HCT116 (cell line): ENCODE measurements at regions of chr13 and their contacts with region 1.

Region 1: GRCh38 chr13:61685682-61686012 is 270.0 kb upstream of the PCDH20 start:
- DNase-seq: peak; percentile 3
- ATAC-seq: peak; percentile 59
- H3K4me3 ChIP-seq: no peak overlapping the region
- H3K27ac ChIP-seq: no peak overlapping the region
- H3K4me1 ChIP-seq: no peaks in the 10 kb centered on the region
- H3K27me3 ChIP-seq: no peaks in the 10 kb centered on the region
- CTCF ChIP-seq: peak; percentile 4 to 21 (median 6); a peak in 2 of 6 replicates
- POLR2A ChIP-seq: no peak
- RAD21 ChIP-seq: peak; percentile 44; the same call in 1 of the 2 replicates

Region 2: DNA sequence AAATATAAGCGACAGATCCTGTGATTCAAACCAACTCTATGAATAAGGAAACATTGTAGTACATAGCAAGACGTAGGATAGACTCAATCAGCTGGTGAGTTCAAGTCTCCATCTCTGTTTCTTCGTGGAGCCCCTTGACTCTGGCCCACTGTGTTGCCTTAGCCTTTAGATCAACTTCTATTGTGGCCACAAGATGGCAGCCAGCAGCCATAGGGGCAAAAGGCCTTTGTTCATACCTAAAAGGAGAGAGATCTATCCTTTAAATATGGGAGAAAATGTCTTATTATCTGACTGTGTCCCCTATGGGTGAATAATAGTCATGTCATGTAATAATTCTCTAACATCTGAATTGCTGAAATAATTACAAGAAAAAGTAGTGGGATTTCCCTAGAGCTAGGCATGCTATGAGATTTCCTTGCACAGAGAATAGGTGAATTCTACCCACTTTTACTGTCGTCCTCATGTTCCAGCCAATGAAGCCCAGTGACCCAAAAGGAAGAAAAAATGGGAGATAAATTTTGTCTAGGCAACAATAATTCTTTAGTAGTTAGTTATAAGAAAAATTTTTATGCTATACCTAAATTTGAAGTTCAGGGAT is 399.4 kb before region 1 on chr13:
- CTCF ChIA-PET with region 1: no interaction called
- POLR2A ChIA-PET with region 1: no interaction called
- RAD21 ChIA-PET with region 1: no interaction called
- intact Hi-C with region 1: loop called (anchors 10 kb)
- DNase-seq: peak; percentile 16
- ATAC-seq: peak; percentile 73; the same call in 1 of the 2 replicates
- H3K4me3 ChIP-seq: no peak overlapping the region
- H3K27ac ChIP-seq: no peak overlapping the region
- H3K4me1 ChIP-seq: no peaks in the 10 kb centered on the region
- H3K27me3 ChIP-seq: no peaks in the 10 kb centered on the region
- CTCF ChIP-seq: peak; percentile 33 to 54 (median 33); a peak in 5 of 6 replicates
- POLR2A ChIP-seq: no peak
- RAD21 ChIP-seq: peak; percentile 50

Region 3: DNA sequence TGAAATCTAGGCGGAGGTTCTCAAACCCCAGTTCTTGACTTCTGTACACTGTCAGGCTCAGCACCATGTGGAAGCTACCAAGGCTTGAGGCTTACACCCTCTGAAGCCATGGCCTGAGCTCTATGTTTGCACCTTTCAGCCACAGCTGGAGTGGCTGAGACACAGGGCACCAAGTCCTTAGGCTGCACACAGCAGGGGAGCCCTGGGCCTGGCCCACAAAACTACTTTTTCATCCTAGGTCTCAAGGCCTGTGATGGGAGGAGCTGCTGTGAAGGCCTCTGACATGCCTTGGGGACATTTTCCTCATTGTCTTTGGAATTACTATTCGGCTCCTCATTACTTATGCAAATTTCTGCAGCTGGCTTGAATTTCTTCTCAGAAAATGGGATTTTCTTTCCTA is 233.2 kb after region 1 on chr13:
- CTCF ChIA-PET with region 1: no interaction called
- POLR2A ChIA-PET with region 1: no interaction called
- RAD21 ChIA-PET with region 1: no interaction called
- intact Hi-C with region 1: no loop called
- DNase-seq: no peak
- ATAC-seq: no peak
- H3K4me3 ChIP-seq: no peak overlapping the region
- H3K27ac ChIP-seq: no peak overlapping the region
- H3K4me1 ChIP-seq: no peaks in the 10 kb centered on the region
- H3K27me3 ChIP-seq: no peaks in the 10 kb centered on the region
- CTCF ChIP-seq: no peak
- POLR2A ChIP-seq: no peak
- RAD21 ChIP-seq: no peak